ENCODE measurements at regions of chr11 and their contacts with region 1.

Region 1: GRCh38 chr11:63838678-63839507 is at the start of gene MARK2:
- DNase-seq: peak; percentile 100
- ATAC-seq: peak; percentile 91
- H3K4me3 Mint-ChIP-seq: peak within 1 kb of the TSS; percentile 86
- H3K27ac Mint-ChIP-seq: peak within 1 kb of the TSS; percentile 85
- H3K4me1 Mint-ChIP-seq: peaks cover 62% of the 10 kb centered on the region
- H3K27me3 Mint-ChIP-seq: no peaks in the 10 kb centered on the region
- total RNA-seq, gene MARK2: 62.1 to 68.6 TPM

Region 2: GRCh38 chr11:63768237-63769043 is 70.5 kb before region 1 on chr11 and contains the start of gene ZFTA:
- CTCF ChIA-PET with region 1: interaction called, 10 read pairs
- POLR2A ChIA-PET with region 1: no interaction called
- DNase-seq: peak; percentile 64
- ATAC-seq: peak; percentile 66
- H3K4me3 Mint-ChIP-seq: peak within 1 kb of the TSS; percentile 92
- H3K27ac Mint-ChIP-seq: peak within 1 kb of the TSS; percentile 81
- H3K4me1 Mint-ChIP-seq: peaks cover 15% of the 10 kb centered on the region
- H3K27me3 Mint-ChIP-seq: peaks cover 27% of the 10 kb centered on the region
- total RNA-seq, gene ZFTA: 4.5 to 5.6 TPM

Region 3: GRCh38 chr11:63871962-63872799 is 33.3 kb after region 1 on chr11:
- CTCF ChIA-PET with region 1: interaction called, 35 read pairs
- POLR2A ChIA-PET with region 1: interaction called, 4 read pairs
- DNase-seq: peak; percentile 69
- ATAC-seq: peak; percentile 80
- H3K4me3 Mint-ChIP-seq: peak overlapping the region; percentile 53
- H3K27ac Mint-ChIP-seq: peak overlapping the region; percentile 75
- H3K4me1 Mint-ChIP-seq: peaks cover 71% of the 10 kb centered on the region
- H3K27me3 Mint-ChIP-seq: no peaks in the 10 kb centered on the region

Region 4: DNA sequence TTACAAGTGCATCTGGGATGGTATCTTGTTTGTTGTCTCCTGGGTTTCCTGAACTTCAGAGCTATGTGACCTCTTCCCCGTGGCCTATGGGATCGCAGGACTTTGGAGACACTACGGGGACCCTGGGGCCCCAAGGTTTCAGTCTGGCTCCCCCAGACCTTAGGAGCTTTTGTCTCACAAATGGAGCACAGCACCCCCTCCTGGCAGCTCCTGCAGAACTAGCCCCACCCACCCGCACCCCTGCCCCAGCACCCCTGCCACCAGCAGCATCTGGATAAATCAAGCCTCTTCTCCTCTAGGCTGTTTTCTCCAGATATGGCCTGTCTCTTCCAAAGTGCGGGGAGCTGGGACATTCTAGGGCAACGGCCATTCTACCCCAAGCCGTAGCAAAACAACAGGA is 67.7 kb after region 1 on chr11:
- CTCF ChIA-PET with region 1: interaction called, 44 read pairs
- POLR2A ChIA-PET with region 1: interaction called, 5 read pairs
- DNase-seq: peak; percentile 62
- ATAC-seq: peak; percentile 32
- H3K4me3 Mint-ChIP-seq: no peak overlapping the region
- H3K27ac Mint-ChIP-seq: peak overlapping the region; percentile 30
- H3K4me1 Mint-ChIP-seq: peaks cover 3% of the 10 kb centered on the region
- H3K27me3 Mint-ChIP-seq: no peaks in the 10 kb centered on the region

Region 5: GRCh38 chr11:63938479-63939396 is 99.8 kb after region 1 on chr11 and contains the start of gene NAA40:
- CTCF ChIA-PET with region 1: interaction called, 188 read pairs
- POLR2A ChIA-PET with region 1: interaction called, 5 read pairs
- DNase-seq: peak; percentile 96
- ATAC-seq: peak; percentile 97
- H3K4me3 Mint-ChIP-seq: peak within 1 kb of the TSS; percentile 85
- H3K27ac Mint-ChIP-seq: peak within 1 kb of the TSS; percentile 89
- H3K4me1 Mint-ChIP-seq: peaks cover 29% of the 10 kb centered on the region
- H3K27me3 Mint-ChIP-seq: peaks cover 2% of the 10 kb centered on the region
- total RNA-seq, gene NAA40: 42.6 to 44.9 TPM

Region 6: GRCh38 chr11:63961608-63962412 is 122.9 kb after region 1 on chr11:
- CTCF ChIA-PET with region 1: interaction called, 11 read pairs
- POLR2A ChIA-PET with region 1: no interaction called
- DNase-seq: peak; percentile 60
- ATAC-seq: peak; percentile 76
- H3K4me3 Mint-ChIP-seq: no peak overlapping the region
- H3K27ac Mint-ChIP-seq: no peak overlapping the region
- H3K4me1 Mint-ChIP-seq: peaks cover 20% of the 10 kb centered on the region
- H3K27me3 Mint-ChIP-seq: no peaks in the 10 kb centered on the region